GM18951 (cell line): ENCODE measurements at regions of chr1 and their contacts with region 1.

Region 1: GRCh38 chr1:28886731-28887418 is 27.5 kb upstream of the EPB41 start:
- POLR2A ChIP-seq: peak; percentile 54

Region 2: DNA sequence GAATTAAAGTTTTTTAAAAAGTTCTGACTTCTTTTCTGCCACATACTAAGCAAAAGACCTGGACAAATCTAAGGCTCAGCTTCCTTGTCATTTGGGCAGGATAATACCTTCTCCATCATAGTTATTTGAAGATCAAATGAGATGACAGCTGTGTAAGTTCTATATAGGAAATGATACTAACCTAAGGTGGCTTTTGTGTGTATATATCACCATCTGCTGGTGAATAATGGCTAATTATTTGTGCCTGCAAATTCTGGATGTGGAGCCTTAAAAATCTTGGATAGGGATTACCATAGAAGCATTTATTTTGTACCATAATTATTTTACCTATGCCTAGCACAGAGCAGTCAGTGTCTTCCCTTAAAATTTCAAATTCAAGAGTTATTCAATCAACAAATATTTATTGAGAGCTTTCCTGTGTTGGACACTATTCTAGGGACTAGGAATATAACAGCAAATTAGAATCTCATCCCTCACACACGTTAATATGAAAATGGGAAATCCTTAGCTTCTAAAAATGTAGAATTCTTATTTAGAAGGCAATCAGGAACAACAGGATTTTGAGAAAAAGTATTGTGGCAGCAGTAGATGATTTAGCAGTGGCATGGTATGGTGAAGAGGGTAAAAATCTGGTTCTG is 147.1 kb after region 1 on chr1:
- in situ Hi-C with region 1: loop called (anchors 5 kb)
- POLR2A ChIP-seq: no peak

Region 3: DNA sequence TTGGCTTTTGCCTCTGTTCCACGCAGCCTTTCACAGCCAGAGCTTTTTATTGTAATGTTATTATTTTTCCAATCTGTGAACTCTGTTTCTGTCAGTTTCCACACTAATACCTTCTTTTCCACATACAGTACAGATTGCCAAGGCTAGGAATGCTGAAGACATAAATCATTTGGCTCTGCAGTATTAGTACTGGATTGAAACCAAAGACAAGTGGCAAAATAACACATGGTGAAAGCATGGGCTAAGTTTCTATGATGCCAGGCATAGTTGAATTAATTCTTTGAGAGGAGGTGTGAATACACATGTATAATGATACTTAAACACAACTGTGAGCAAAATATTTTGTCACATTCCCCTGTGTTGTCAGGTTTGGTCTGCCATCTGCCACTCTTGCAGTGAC is 163.3 kb after region 1 on chr1:
- in situ Hi-C with region 1: no loop called
- POLR2A ChIP-seq: no peak

Region 4: DNA sequence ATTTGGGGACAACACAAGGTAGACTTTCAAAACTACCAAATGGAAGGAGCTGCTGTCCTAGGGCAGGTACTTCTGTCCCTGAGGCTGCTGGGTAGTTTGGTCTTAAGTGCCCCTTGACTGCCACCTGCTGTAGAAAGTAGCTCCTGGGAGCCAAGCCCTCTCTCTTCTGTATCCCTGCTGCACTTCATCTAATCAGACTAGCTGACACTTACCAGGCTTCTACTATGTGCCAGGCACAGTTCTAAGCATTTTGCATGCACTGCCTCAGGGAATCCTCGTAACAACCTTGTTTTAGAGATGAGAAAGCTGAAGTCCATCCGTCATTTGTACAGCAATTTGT is 310.7 kb after region 1 on chr1:
- in situ Hi-C with region 1: loop called (anchors 10 kb)
- POLR2A ChIP-seq: no peak